Dorsolateral prefrontal cortex (tissue), 120 donors: ENCODE measurements at regions of chr1 and their contacts with region 1.

Region 1: DNA sequence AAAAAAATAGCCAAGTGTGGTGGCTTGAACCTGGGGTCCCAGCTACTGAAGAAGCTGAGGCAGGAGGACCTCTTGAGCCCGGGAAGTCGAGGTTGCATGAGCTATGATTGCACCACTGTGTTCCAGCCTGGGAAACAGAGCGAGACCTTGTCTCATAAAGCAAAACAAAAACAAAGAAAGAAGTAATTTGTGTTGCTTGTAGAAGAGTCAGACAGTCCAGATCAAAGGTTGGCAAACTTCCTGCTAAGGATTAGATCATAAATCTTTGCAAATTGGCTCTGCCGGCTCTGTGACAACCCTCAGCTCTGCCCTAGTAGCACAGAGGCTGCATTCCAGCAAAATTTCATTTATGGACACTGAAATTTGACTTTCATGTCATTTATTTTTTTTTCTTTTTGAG is 19.0 kb upstream of the MFN2 start:
- DNase-seq: peak in 1 of 10 donors; percentile 36
- H3K4me3 ChIP-seq: peak overlapping the region in 6 of 59 donors; percentile 8 to 37 (median 14)
- H3K27ac ChIP-seq: peak overlapping the region; percentile 15 to 95 (median 85)
- H3K27me3 ChIP-seq: no peaks in the 10 kb centered on the region
- CTCF ChIP-seq: peak in 2 of 56 donors; percentile 6 to 18

Region 2: GRCh38 chr1:11940260-11940921 is 20.8 kb before region 1 on chr1:
- intact Hi-C with region 1: loop called in 1 of 2 experiments (anchors 1 kb)
- DNase-seq: peak in 9 of 10 donors; percentile 9 to 80 (median 68)
- H3K4me3 ChIP-seq: no peak overlapping the region
- H3K27ac ChIP-seq: peak overlapping the region in 50 of 59 donors; percentile 3 to 95 (median 65)
- H3K27me3 ChIP-seq: no peaks in the 10 kb centered on the region
- CTCF ChIP-seq: peak in 5 of 56 donors; percentile 4 to 22 (median 15)